ENCODE measurements at regions of chr9 and their contacts with region 1.

Region 1: DNA sequence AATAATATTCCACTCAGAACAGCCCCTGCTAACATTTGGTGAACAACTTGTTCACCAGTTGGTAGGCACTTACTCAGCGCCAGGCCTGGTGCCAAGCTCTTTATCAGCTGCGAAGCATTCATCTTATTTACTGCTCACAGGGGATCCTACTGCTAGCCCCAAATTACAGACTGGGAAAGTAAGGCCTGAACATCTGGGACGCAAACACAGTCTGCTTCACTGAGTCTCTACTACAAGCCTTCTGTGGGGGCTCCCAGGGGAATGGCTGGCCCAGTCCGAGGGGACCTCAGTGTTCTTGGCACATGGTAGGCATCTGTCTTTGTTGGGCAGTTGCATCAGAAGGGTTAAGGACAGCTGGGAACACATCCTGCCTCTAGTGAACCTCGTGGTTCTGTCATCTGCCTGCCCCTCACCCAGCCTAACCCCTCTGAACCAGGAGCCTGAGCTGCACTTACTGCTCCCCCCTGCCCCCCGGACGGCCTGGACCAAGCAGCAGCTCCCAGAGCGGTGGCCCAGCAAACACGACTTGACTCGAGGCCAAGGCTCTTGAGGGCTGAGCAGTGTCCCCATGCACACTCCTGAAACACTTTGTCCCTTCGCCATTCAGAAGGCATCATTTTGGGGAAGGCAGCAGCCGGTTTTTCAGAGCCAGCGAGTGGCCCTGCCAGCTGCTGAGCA is at the start of gene PHYHD1:
- DNase-seq: no peak
- ATAC-seq: no peak
- H3K4me3 Mint-ChIP-seq: no peak within 1 kb of the TSS
- H3K27ac Mint-ChIP-seq: peak within 1 kb of the TSS; percentile 46
- H3K4me1 Mint-ChIP-seq: peaks cover 4% of the 10 kb centered on the region
- H3K27me3 Mint-ChIP-seq: no peaks in the 10 kb centered on the region
- total RNA-seq, gene PHYHD1: 0.55 to 0.68 TPM

Region 2: GRCh38 chr9:128846680-128847030 is 73.9 kb before region 1 on chr9:
- CTCF ChIA-PET with region 1: interaction called, 14 read pairs
- POLR2A ChIA-PET with region 1: interaction called, 3 read pairs
- DNase-seq: no peak
- ATAC-seq: no peak
- H3K4me3 Mint-ChIP-seq: no peak overlapping the region
- H3K27ac Mint-ChIP-seq: no peak overlapping the region
- H3K4me1 Mint-ChIP-seq: peaks cover 3% of the 10 kb centered on the region
- H3K27me3 Mint-ChIP-seq: no peaks in the 10 kb centered on the region

Region 3: DNA sequence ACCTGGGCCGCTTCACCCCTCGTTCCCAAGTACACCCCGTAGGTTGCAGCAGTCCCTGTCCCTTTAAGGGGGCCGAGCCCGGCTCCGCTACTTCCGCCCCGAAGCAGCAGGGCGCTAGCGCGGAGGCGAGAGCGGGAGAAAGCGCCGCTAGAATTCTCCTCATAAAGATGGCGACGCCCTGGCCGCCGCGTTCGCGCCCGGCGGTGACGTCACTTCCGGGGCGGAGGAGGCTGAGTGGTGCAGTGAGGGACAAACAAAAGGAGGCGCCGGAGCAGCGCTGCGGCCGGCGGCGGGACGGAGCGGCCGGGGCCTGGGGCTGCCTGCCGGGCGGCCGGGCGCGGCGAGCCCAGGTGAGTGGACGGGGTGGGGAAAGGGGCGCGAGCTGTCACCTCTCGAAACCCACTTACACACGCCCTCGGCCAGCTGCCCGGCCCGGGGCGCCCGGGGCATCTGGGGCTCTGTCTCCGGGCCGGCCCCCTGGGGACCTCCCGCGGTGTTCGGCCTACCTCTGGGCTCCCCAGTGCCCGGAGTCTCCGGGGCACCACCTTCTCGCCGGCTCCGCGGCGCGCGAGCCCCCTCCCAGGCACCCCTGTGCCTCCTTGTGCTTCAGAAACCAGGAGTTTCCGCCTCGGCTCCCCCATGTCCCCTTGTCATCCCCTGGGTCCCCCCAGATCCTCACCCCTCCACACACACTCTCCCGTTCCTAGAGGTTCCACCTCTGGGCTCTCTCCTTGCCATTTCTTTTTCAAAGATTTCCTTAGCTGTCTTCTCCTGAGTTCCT is 38.4 kb before region 1 on chr9 and contains the starts of genes KYAT1 and LRRC8A:
- CTCF ChIA-PET with region 1: interaction called, 11 read pairs
- POLR2A ChIA-PET with region 1: interaction called, 3 read pairs
- DNase-seq: peak; percentile 99
- ATAC-seq: peak; percentile 96
- H3K4me3 Mint-ChIP-seq: peak within 1 kb of the TSS; percentile 96
- H3K27ac Mint-ChIP-seq: peak within 1 kb of the TSS; percentile 91
- H3K4me1 Mint-ChIP-seq: peaks cover 53% of the 10 kb centered on the region
- H3K27me3 Mint-ChIP-seq: no peaks in the 10 kb centered on the region
- total RNA-seq, gene KYAT1: 12.6 to 13.0 TPM
- total RNA-seq, gene LRRC8A: 26.1 to 27.2 TPM

Region 4: DNA sequence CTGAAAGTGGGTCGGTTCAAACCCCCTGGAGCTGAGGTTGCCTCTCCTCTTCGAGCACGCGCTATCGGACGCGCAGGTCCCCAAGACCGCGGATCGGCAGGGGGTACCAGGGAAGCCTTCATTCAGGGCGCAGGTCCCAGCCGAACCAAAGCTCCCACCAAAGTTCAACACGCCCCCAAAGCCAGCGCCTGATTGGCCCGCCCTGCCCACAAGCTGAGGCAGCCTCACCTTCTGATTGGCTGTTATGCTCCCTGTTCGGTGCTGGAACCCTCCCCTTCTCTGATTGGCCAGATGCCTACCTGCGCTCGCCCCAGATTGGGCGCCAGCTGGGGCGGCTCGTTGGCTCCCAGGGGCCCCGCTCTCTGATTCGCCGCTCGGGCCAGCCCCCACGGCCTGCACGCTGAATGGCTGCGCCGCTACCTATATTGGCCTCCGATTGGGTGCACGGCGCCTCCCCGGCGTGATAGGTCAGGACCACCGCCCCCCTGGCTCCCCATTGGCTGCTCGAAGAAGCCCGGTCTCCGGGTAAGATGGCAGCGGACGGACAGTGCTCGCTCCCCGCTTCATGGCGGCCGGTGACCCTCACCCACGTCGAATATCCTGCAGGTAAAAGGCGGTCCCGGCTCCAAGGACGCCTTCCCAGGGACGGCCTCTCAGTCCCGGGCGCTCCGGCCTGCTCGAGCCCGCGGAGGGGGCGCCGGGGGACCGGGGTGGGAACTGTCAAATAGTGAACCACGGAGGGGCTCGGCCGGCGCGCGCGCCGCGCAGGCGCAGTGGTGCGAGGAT is 160.3 kb after region 1 on chr9 and contains the start of gene DOLPP1:
- CTCF ChIA-PET with region 1: no interaction called
- POLR2A ChIA-PET with region 1: no interaction called
- DNase-seq: peak; percentile 99
- ATAC-seq: peak; percentile 98
- H3K4me3 Mint-ChIP-seq: peak within 1 kb of the TSS; percentile 91
- H3K27ac Mint-ChIP-seq: peak within 1 kb of the TSS; percentile 79
- H3K4me1 Mint-ChIP-seq: peaks cover 34% of the 10 kb centered on the region
- H3K27me3 Mint-ChIP-seq: no peaks in the 10 kb centered on the region
- total RNA-seq, gene DOLPP1: 15.9 to 18.8 TPM

Region 5: GRCh38 chr9:129211704-129212103 is 291.2 kb after region 1 on chr9:
- CTCF ChIA-PET with region 1: no interaction called
- POLR2A ChIA-PET with region 1: no interaction called
- DNase-seq: no peak
- ATAC-seq: no peak
- H3K4me3 Mint-ChIP-seq: no peak overlapping the region
- H3K27ac Mint-ChIP-seq: no peak overlapping the region
- H3K4me1 Mint-ChIP-seq: peaks cover 27% of the 10 kb centered on the region
- H3K27me3 Mint-ChIP-seq: no peaks in the 10 kb centered on the region